ENCODE measurements at regions of chr14 and their contacts with region 1.

Region 1: DNA sequence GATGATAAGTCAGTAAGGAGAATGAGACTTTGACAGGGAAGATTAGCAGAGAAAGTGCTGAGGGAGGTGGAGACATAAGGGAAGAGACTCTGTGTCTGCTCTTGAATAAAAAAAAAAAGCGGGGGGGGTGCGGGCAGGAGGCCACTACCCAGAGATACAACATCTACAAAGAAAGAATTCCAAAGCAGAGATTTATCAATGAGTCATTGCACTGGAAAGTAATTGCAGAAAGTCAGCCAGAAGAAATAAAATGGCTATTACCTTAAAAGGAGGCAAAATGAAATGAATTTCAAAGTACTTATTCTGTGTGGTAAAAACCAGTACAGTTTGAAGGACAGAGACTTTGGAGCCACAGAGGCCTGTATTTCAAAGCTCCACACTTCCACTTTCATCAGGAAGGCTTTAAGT is 267.1 kb upstream of the PRKD1 start:
- DNase-seq: no peak
- H3K4me3 ChIP-seq: peak overlapping the region in 1 of 2 donors; percentile 9
- H3K27ac ChIP-seq: peak overlapping the region; percentile 68 to 86
- H3K4me1 ChIP-seq: peaks cover 3 to 22% of the 10 kb centered on the region in 2 donors
- H3K27me3 ChIP-seq: no peaks in the 10 kb centered on the region
- CTCF ChIP-seq: no peak

Region 2: DNA sequence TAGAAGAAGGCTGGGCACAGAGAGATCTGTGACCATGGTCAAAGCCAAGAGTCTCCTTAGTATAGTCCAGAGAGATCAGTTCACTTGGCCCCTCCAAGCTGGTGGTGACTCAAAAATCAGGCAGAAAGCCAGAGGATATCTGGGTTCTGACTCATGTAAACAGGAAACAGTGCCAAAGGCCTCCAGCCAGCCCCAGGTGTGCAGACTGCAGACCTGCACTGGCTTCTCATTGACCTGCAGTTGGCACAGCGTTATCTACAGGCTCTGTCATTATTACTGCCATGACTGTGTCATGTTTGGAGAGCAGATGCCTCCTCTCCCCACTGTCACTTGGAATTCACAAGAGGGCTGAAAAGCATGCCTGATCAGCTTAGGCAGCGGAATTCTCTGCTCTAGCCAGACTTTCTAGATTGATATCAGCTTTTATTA is 28.7 kb after region 1 on chr14:
- intact Hi-C with region 1: loop called (anchors 2 kb)
- DNase-seq: peak; percentile 15 to 87
- H3K4me3 ChIP-seq: no peak overlapping the region
- H3K27ac ChIP-seq: peak overlapping the region; percentile 82 to 87
- H3K4me1 ChIP-seq: peaks cover 8 to 48% of the 10 kb centered on the region in 2 donors
- H3K27me3 ChIP-seq: no peaks in the 10 kb centered on the region
- CTCF ChIP-seq: no peak

Region 3: DNA sequence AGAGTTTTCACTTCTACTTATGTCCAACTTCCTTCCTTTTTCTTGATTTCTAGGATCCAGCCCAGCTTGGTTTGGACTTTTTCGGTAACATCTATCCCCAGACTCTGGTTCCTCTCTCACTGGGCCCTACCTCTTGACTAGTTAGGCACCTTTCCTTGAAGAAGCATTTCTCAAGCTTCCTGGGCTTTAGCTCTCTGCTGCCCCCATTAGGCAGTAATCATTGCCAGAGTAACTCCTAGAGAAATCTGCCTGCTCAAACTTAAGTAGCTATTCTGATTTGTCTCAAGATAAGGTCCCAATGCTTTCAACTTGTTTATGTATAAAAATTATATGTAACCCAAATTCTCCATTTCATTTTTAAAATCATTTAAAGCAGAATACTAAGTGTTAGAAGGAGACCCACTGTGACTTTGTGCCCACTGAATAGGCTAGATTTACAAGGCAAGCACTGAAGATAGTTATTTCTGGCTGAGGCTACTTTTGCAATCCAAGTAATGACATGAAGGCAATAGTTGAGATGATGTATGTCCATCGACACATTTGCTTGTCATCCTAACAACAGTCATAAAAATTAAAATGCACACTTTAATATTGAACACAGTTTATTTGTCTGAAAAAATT is 89.2 kb after region 1 on chr14:
- intact Hi-C with region 1: no loop called
- DNase-seq: no peak
- H3K4me3 ChIP-seq: no peak overlapping the region
- H3K27ac ChIP-seq: no peak overlapping the region
- H3K4me1 ChIP-seq: no peaks in the 10 kb centered on the region
- H3K27me3 ChIP-seq: no peaks in the 10 kb centered on the region
- CTCF ChIP-seq: peak in 1 of 3 experiments; percentile 45

Region 4: GRCh38 chr14:30375296-30375892 is 180.6 kb after region 1 on chr14:
- intact Hi-C with region 1: no loop called
- DNase-seq: peak; percentile 12 to 71
- H3K4me3 ChIP-seq: no peak overlapping the region
- H3K27ac ChIP-seq: no peak overlapping the region
- H3K4me1 ChIP-seq: no peaks in the 10 kb centered on the region
- H3K27me3 ChIP-seq: no peaks in the 10 kb centered on the region
- CTCF ChIP-seq: peak; percentile 12 to 52 (median 48)

Region 5: GRCh38 chr14:30621940-30622830 is 427.4 kb after region 1 on chr14 and contains the start of gene SCFD1:
- intact Hi-C with region 1: loop called (anchors 10 kb)
- DNase-seq: peak; percentile 68 to 97
- H3K4me3 ChIP-seq: peak within 1 kb of the TSS; percentile 82 to 88
- H3K27ac ChIP-seq: peak within 1 kb of the TSS; percentile 76 to 83
- H3K4me1 ChIP-seq: peaks cover 0 to 6% of the 10 kb centered on the region in 2 donors
- H3K27me3 ChIP-seq: no peaks in the 10 kb centered on the region
- CTCF ChIP-seq: peak in 1 of 3 experiments; percentile 4
- total RNA-seq, gene SCFD1: 41.0 TPM